Calu3 (cell line): ENCODE measurements at regions of chr7 and their contacts with region 1.

Region 1: DNA sequence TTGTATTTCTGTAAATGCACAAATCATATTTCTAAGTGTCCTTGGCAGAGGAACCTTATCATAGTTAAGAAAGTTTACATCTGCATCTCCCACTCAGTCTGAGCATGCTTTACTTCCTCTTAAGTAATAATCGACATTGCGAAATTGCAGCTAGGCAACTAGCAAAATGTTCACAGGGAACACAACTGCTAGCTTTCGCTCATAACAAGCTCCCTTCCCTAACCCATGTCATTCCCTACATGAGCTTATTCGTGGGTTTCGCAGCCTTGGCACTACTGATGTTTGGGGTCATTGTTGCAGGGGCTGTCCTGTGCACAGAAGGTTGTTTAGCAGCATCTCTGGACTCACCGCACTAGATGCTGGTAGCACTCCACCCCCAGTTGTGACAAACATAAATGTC is 71.6 kb downstream of the AHR start:
- DNase-seq: peak; percentile 69
- H3K4me3 Mint-ChIP-seq: peak overlapping the region; percentile 22
- H3K27ac Mint-ChIP-seq: peak overlapping the region; percentile 92
- H3K4me1 Mint-ChIP-seq: peaks cover 71% of the 10 kb centered on the region
- H3K27me3 Mint-ChIP-seq: no peaks in the 10 kb centered on the region
- CTCF ChIP-seq: no peak

Region 2: GRCh38 chr7:16989811-16990413 is 380.2 kb before region 1 on chr7:
- CTCF ChIA-PET with region 1: no interaction called
- intact Hi-C with region 1: loop called (anchors 5 kb)
- DNase-seq: peak; percentile 95
- H3K4me3 Mint-ChIP-seq: peak overlapping the region; percentile 51
- H3K27ac Mint-ChIP-seq: peak overlapping the region; percentile 100
- H3K4me1 Mint-ChIP-seq: peaks cover 73% of the 10 kb centered on the region
- H3K27me3 Mint-ChIP-seq: no peaks in the 10 kb centered on the region
- CTCF ChIP-seq: no peak

Region 3: GRCh38 chr7:17318146-17318545 is 51.9 kb before region 1 on chr7:
- CTCF ChIA-PET with region 1: no interaction called
- intact Hi-C with region 1: no loop called
- DNase-seq: no peak
- H3K4me3 Mint-ChIP-seq: peak overlapping the region; percentile 54
- H3K27ac Mint-ChIP-seq: peak overlapping the region; percentile 93
- H3K4me1 Mint-ChIP-seq: peaks cover 71% of the 10 kb centered on the region
- H3K27me3 Mint-ChIP-seq: no peaks in the 10 kb centered on the region
- CTCF ChIP-seq: no peak

Region 4: GRCh38 chr7:17408245-17408903 is 38.3 kb after region 1 on chr7:
- CTCF ChIA-PET with region 1: interaction called, 3 read pairs
- intact Hi-C with region 1: loop called (anchors 1 kb)
- DNase-seq: peak; percentile 85
- H3K4me3 Mint-ChIP-seq: peak overlapping the region; percentile 24
- H3K27ac Mint-ChIP-seq: peak overlapping the region; percentile 82
- H3K4me1 Mint-ChIP-seq: peaks cover 53% of the 10 kb centered on the region
- H3K27me3 Mint-ChIP-seq: no peaks in the 10 kb centered on the region
- CTCF ChIP-seq: no peak

Region 5: GRCh38 chr7:17466216-17466615 is 96.1 kb after region 1 on chr7:
- CTCF ChIA-PET with region 1: no interaction called
- intact Hi-C with region 1: no loop called
- DNase-seq: no peak
- H3K4me3 Mint-ChIP-seq: no peak overlapping the region
- H3K27ac Mint-ChIP-seq: no peak overlapping the region
- H3K4me1 Mint-ChIP-seq: no peaks in the 10 kb centered on the region
- H3K27me3 Mint-ChIP-seq: no peaks in the 10 kb centered on the region
- CTCF ChIP-seq: no peak

Region 6: DNA sequence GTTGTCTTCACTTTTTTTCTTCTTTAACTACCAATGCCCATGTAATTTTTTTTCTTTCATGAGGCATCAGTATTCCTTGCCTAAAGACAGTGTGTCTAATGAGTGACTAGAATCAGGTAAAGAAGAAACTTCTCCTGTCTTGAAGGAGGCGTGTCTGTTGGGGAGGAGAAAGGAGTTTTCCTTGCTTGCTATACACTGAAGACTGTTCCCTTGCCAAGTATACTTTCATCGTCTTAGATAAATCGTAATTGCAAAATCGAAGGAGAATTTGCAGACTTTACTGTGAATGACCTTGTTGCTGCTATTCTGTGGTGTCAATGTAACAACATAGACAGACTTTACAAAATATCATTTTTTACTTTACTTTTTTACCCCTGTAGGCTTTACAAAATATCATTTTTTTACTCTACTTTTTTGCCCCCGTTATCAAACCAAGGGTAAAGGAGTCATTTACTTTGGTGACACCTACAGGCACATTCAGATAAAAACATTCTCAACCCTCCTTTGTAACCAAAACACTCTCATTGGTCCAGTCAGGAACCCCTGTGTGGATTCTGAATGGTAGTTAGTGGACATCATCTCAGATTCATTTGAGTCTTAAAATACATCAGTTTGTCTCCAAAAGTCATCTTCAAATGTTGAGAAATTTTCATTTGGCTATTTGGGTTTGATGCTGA is 160.8 kb after region 1 on chr7:
- CTCF ChIA-PET with region 1: interaction called, 5 read pairs
- intact Hi-C with region 1: loop called (anchors 1 kb)
- DNase-seq: no peak
- H3K4me3 Mint-ChIP-seq: no peak overlapping the region
- H3K27ac Mint-ChIP-seq: peak overlapping the region; percentile 86
- H3K4me1 Mint-ChIP-seq: peaks cover 66% of the 10 kb centered on the region
- H3K27me3 Mint-ChIP-seq: no peaks in the 10 kb centered on the region
- CTCF ChIP-seq: peak; percentile 41